Activated CD4-positive, alpha-beta T cell treated with anti-CD3 and anti-CD28 coated beads for 36 hours (primary cell): ENCODE measurements at regions of chr5 and their contacts with region 1.

Region 1: GRCh38 chr5:43227655-43228054 is 35.6 kb downstream of the NIM1K start:
- DNase-seq: no peak
- ATAC-seq: peak; percentile 26
- H3K4me3 Mint-ChIP-seq: no peak overlapping the region
- H3K27ac Mint-ChIP-seq: no peak overlapping the region
- H3K4me1 Mint-ChIP-seq: no peaks in the 10 kb centered on the region
- H3K27me3 Mint-ChIP-seq: no peaks in the 10 kb centered on the region

Region 2: DNA sequence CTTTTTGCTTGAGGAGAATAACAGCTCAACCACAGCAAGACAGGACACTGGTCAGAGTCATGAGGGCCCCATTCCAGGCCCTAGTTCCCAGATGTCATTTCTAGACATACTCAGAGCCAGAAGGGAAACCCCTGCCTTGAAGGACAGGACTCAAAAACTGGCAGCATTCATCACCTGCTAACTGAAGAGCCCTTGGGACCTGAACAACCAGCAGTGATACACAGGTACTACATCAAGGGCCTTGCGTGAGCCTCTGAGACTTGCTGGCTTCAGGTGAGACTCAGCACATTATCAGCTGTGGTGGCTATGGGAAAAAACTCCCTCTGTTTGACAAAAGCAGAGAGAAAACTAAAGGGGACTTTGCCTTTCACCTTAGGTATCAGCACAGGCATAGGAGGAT is 233.4 kb after region 1 on chr5:
- CTCF ChIA-PET with region 1: no interaction called
- POLR2A ChIA-PET with region 1: no interaction called
- intact Hi-C with region 1: no loop called
- DNase-seq: no peak
- ATAC-seq: no peak
- H3K4me3 Mint-ChIP-seq: no peak overlapping the region
- H3K27ac Mint-ChIP-seq: no peak overlapping the region
- H3K4me1 Mint-ChIP-seq: no peaks in the 10 kb centered on the region
- H3K27me3 Mint-ChIP-seq: no peaks in the 10 kb centered on the region

Region 3: DNA sequence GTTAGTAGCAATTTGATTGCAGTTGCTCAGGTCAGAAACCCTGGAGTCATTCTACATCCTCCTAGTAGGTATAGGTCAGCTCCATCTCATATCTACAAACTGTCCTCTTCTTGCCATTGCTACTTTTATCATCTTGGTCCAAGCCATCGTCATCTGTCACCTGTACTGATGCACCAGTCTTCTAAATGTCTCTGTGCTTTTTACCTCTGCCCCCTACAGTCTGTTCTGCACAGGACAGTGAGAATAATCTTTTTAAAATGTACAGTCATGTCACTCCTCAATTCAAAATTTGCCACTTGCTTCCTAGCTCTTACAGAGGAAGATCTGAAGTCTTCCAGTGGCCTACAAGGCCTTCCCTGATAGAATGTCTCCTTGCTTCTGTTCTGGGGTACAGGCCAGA is 382.1 kb after region 1 on chr5:
- CTCF ChIA-PET with region 1: interaction called, 3 read pairs
- POLR2A ChIA-PET with region 1: no interaction called
- intact Hi-C with region 1: loop called in 1 of 2 experiments (anchors 5 kb)
- DNase-seq: no peak
- ATAC-seq: peak; percentile 91
- H3K4me3 Mint-ChIP-seq: no peak overlapping the region
- H3K27ac Mint-ChIP-seq: no peak overlapping the region
- H3K4me1 Mint-ChIP-seq: peaks cover 24% of the 10 kb centered on the region
- H3K27me3 Mint-ChIP-seq: no peaks in the 10 kb centered on the region